Sigmoid colon (tissue), 7 donors: ENCODE measurements at regions of chr16 and their contacts with region 1.

Region 1: DNA sequence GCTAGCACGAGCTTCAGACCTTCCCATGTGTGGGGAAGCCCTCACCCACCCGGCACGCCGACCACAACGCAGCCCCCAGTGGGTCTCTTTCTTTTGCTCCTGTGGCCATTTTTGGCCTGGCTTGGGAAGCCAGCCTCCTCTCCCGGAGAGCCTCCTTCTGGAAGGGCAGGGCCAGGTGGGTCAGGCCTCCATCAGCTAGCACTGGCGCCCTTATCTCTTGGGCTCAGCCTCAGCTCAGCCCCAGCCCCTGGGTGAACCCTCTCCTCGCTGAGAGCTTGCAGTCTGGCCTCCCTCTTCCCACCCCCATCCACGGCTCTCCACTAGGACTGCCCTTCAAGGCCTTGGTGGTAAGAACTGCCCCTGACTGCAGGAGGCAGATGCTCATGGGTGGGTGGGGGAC is 14.7 kb upstream of the JPH3 start:
- DNase-seq: no peak
- H3K4me3 ChIP-seq: no peak overlapping the region
- H3K27ac ChIP-seq: no peak overlapping the region
- H3K4me1 ChIP-seq: peaks cover 0 to 19% (median 9%) of the 10 kb centered on the region in 4 donors
- H3K27me3 ChIP-seq: peaks cover 0 to 50% (median 5%) of the 10 kb centered on the region in 3 donors
- CTCF ChIP-seq: no peak
- EP300 ChIP-seq: no peak
- POLR2A ChIP-seq: no peak

Region 2: DNA sequence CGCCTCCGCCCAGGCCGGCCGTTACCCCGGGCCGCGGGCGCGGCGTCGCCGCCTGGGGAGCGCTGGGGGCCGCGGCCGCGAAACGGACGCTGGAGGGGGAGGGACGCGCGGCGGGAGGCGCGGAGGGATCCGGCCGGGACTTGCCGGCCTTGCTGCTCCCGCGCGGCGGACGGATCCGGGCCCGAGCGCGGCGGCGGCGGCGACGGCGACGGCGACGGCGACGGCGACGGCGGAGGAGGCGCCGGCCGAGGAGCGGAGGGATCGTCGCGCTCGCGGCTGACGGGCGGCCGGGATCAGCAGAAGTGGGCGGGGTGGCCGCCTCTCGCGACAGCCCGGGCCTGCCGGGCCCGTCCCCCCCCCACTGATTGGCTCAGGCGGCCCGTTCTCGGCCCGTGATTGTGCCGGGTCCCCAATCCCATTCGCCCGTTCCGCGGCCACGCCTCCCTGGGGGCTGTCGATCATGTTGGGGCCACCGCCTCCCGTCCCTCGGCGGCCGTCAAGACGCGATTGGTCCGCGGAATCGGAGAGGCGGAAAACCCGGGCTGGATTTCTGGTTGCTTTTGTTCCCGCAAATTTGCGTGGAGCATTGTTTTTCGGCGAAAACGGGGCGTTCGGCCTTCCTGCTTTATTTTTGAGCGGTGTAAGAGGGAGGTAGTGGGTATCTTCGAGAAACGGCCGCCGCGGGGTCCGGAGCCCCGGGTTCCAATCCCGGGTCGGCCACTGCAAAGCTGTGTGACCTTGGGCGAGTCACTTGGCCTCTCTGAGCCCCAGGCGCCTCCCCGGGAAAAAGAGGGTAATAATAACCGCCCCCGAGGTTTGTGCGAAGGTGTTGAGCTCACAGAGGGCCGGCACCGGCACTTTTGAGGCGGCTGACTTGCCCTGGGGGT is 94.7 kb before region 1 on chr16 and contains the start of gene ZCCHC14:
- intact Hi-C with region 1: no loop called
- DNase-seq: peak; percentile 99
- H3K4me3 ChIP-seq: peak within 1 kb of the TSS; percentile 36 to 64 (median 58)
- H3K27ac ChIP-seq: peak within 1 kb of the TSS; percentile 67 to 87 (median 77)
- H3K4me1 ChIP-seq: peaks cover 2 to 41% (median 37%) of the 10 kb centered on the region in 4 donors
- H3K27me3 ChIP-seq: no peaks in the 10 kb centered on the region
- CTCF ChIP-seq: no peak
- EP300 ChIP-seq: no peak
- POLR2A ChIP-seq: no peak
- total RNA-seq, gene ZCCHC14: 11.4 to 23.8 (median 15.2) TPM

Region 3: DNA sequence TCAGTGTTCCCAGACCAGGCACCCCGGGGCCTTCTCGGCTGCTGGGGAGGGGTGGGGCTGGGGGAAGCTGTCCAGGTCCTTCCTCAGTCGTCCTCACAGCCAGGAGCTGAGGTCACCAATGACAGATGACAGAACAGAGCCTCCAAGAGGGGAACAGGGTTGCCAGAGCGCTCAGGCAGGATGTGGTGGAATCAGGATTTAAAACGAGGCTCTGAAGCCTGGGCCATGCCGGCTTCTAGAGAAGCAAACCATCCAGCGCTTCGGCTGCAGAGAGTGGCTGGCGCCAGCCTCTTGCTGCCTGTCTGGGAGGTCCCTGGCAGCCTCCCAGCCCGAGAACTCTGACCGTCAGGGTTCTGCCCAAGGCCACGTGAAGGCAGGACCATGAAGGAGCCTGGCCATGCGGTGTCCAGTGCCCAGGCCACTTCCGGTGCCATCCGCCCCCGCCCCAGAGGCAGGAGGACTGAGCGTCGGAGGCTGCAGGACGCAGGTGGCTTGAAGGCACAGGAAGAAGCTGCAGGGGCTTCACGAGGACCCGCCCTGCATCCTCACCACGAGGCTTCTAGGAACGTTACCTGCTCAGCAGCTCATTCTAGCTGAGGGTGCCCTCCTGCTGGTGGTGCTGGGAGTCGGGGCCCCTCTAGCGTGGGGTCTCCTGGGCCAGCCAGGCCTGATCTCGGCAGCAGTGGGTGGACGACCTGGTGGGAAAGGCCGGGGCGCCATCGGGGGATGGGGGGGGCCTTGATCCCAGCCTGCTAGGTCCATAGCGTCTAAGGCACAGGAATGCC is 99.7 kb after region 1 on chr16:
- intact Hi-C with region 1: no loop called
- DNase-seq: no peak
- H3K4me3 ChIP-seq: no peak overlapping the region
- H3K27ac ChIP-seq: no peak overlapping the region
- H3K4me1 ChIP-seq: peaks cover 0 to 8% (median 3%) of the 10 kb centered on the region in 4 donors
- H3K27me3 ChIP-seq: peaks cover 0 to 91% (median 26%) of the 10 kb centered on the region in 3 donors
- CTCF ChIP-seq: no peak
- EP300 ChIP-seq: no peak
- POLR2A ChIP-seq: no peak

Region 4: DNA sequence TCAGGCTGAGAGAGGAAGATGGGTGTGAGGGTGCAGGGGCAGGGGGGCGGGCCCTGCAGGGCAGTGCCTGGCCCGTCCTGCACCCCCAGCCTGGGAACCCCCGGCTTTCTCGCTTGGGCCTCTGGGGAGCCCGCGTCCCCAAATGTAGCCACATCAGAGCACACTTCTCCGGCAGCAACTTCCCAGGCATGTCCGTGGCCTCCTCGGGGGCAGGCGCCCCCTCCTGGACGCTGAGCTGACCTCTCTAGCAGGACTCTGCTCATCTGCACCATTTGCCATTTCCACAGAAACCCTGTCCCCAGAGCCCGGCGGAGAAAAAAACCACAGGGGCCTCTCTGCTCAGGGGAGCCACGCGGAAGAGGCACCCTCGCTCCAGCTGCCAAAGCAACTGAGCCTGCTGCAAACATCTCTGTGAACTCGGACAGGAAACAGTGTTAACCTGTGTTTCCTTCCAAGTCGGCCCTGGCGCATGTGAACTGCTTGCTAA is 114.7 kb after region 1 on chr16:
- intact Hi-C with region 1: no loop called
- DNase-seq: no peak
- H3K4me3 ChIP-seq: no peak overlapping the region
- H3K27ac ChIP-seq: no peak overlapping the region
- H3K4me1 ChIP-seq: no peaks in the 10 kb centered on the region
- H3K27me3 ChIP-seq: no peaks in the 10 kb centered on the region
- CTCF ChIP-seq: no peak
- EP300 ChIP-seq: no peak
- POLR2A ChIP-seq: no peak

Region 5: GRCh38 chr16:87754535-87754934 is 166.9 kb after region 1 on chr16:
- intact Hi-C with region 1: no loop called
- DNase-seq: no peak
- H3K4me3 ChIP-seq: no peak overlapping the region
- H3K27ac ChIP-seq: no peak overlapping the region
- H3K4me1 ChIP-seq: no peaks in the 10 kb centered on the region
- H3K27me3 ChIP-seq: no peaks in the 10 kb centered on the region
- CTCF ChIP-seq: no peak
- EP300 ChIP-seq: no peak
- POLR2A ChIP-seq: no peak

Region 6: DNA sequence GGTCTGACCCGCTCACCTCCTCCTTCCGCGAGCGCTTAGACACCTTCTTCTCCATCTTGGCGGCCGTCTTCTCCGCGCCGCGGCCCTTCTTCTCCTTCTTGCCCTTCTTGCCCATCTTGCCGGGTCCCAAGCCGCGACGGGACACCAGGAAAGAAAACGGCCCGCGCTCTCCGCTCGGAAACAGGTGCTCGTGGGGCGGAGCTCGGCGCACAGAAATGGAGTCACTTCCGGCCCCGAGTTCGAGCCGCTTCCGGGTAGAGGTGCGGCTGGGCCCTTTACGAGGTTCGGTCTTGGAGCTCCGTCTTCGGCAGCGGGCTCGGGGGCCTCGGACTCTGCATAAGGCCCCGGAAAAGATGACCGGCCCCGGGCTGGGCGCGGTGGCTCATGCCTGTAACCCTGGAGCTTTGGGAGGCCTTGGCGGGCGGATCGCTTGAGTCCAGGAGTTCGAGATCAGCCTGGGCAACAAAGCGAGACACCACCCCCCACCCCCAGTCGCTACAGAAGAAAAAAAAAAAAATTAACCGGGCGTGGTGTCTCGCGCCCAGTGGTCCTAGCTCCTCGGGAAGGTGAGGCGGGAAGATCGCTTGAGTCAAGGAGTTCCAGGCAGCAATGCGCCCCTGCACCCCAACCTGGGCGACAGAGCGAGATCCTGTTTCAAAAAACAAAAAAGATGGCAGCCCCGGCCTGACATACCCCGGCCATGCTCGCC is 178.3 kb after region 1 on chr16 and contains the start of gene KLHDC4:
- intact Hi-C with region 1: loop called (anchors 2 kb)
- DNase-seq: peak; percentile 94
- H3K4me3 ChIP-seq: peak within 1 kb of the TSS; percentile 80 to 84 (median 80)
- H3K27ac ChIP-seq: peak within 1 kb of the TSS; percentile 80 to 89 (median 83)
- H3K4me1 ChIP-seq: peaks cover 0 to 21% (median 16%) of the 10 kb centered on the region in 4 donors
- H3K27me3 ChIP-seq: no peaks in the 10 kb centered on the region
- CTCF ChIP-seq: no peak
- EP300 ChIP-seq: no peak
- POLR2A ChIP-seq: peak; percentile 72 to 79
- total RNA-seq, gene KLHDC4: 24.6 to 28.5 (median 25.5) TPM